ENCODE measurements at regions of chr1 and their contacts with region 1.

Region 1: DNA sequence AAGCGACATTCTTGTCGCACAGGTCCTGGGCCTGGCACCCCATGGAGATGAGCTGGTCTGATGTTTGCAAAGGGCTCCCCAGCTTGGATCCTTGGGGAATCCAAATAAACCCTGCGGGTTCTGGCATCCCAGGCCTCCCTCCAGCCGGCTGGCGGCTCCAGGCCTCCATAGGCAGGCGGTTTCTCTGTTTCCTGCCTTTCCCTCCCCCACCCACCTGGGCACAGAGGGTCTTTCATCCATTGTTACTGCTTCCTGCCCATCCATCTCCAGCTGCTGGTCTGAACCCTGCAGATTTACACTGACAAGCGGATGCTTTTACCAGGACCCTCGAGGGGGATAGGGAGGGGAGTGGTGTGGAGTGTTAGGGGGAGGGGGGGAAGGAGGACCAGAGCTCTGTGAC is 39.1 kb upstream of the ID3 start:
- DNase-seq: no peak
- ATAC-seq: no peak
- H3K4me3 ChIP-seq: no peak overlapping the region
- H3K4me3 Mint-ChIP-seq: peak overlapping the region in 5 of 10 donors; percentile 6 to 88 (median 69)
- H3K27ac ChIP-seq: peak overlapping the region; percentile 40
- H3K27ac Mint-ChIP-seq: peak overlapping the region in 6 of 9 donors; percentile 3 to 84 (median 72)
- H3K4me1 ChIP-seq: peaks cover 73 to 92% of the 10 kb centered on the region in 2 donors
- H3K4me1 Mint-ChIP-seq: peaks cover 50 to 97% (median 85%) of the 10 kb centered on the region in 7 donors
- H3K27me3 ChIP-seq: no peaks in the 10 kb centered on the region
- H3K27me3 Mint-ChIP-seq: no peaks in the 10 kb centered on the region

Region 2: DNA sequence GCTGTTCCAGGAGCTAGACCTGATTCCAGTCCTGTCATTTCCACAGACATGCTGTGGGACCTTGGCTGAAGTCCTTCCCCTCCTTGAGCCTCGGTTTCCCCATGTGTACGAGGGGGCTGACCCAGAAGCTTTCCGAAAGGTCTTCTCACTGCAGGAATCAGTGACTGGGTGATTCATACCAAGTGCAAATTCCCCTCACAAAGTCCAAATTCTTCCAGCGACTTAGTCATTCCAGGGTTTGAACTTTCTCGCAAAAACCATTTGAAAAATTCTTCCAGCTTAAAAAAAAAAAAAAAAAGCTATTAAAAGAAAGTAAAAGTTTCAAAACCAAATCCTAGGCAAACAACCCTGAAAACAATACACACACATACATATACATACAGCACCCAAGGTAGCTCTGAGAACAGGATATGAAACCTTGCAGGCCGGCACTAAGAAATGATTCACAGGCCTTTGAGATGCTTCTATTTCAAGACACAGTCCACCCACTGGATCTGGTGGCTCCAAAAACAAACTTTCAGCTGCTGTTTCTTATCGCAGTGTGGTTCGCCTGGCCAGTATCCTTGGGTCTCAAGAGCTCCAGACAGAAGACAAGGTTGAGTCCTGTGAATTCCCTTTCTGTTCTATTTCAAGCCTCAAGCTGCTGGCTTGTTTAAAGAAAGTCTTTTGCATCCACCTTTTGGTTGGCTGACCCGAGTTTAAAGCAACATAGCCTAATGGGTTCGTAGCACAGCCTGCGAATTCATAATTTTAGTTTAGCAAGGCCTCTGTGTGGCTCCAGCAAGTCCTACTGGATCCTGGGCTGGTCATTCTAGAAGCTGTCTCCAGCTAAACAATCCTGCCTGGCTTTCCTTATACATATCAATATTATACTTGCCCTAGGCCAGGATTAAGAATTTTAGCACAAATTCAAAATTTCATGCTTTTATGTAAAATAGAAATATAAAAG is 21.1 kb before region 1 on chr1:
- CTCF ChIA-PET with region 1: interaction called, 9 read pairs
- POLR2A ChIA-PET with region 1: interaction called, 1,267 read pairs
- intact Hi-C with region 1: loop called in 1 of 2 experiments (anchors 2 kb)
- DNase-seq: peak in 1 of 9 donors; percentile 50
- ATAC-seq: peak; percentile 79
- H3K4me3 ChIP-seq: peak overlapping the region; percentile 25
- H3K4me3 Mint-ChIP-seq: peak overlapping the region; percentile 41 to 72 (median 62)
- H3K27ac ChIP-seq: peak overlapping the region; percentile 59
- H3K27ac Mint-ChIP-seq: peak overlapping the region; percentile 22 to 97 (median 84)
- H3K4me1 ChIP-seq: peaks cover 6 to 29% of the 10 kb centered on the region in 2 donors
- H3K4me1 Mint-ChIP-seq: peaks cover 12 to 67% (median 53%) of the 10 kb centered on the region in 7 donors
- H3K27me3 ChIP-seq: no peaks in the 10 kb centered on the region
- H3K27me3 Mint-ChIP-seq: no peaks in the 10 kb centered on the region

Region 3: DNA sequence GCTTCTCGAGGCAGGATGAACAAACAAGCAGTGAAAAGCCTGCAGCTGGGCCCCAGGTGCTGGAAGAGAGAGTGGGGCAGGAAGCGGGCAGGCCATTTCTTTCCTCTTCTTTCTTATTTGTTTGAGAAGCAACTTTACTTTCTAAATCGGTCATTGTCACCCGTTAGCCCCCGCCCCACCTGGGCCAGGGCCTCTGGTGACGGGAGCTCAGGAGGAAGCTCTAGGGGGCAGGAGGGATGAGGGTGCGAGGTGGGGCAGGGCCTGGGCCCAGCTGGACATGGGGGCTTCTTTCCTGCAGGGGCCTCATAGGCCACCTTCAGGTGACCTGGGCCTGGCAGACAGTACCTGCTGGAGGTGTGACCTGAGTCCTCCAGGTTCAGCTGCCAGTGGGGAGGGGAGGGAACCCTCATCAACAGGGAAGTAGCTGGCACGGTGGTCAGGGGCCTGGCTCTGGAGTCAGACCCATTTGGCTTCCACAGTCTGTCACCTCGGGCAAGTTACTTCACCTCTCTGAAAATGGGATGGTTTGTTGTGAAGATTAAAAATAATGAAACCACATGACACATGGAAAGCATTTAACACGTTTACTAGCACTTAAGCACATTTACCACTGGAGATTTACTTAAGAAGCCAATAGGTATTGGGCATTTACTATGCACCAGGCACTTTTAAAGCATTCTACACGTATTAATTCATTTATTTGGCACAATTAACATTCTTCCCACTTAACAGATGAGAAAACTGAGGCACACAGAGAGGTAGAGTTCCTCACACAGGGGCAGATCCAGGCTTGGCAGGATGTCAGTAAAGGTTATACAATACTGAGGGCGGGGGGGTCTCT is 15.0 kb after region 1 on chr1:
- CTCF ChIA-PET with region 1: interaction called, 46 read pairs
- POLR2A ChIA-PET with region 1: interaction called, 1,267 read pairs
- intact Hi-C with region 1: loop called (anchors 1 to 2 kb)
- DNase-seq: peak in 8 of 9 donors; percentile 52 to 72 (median 64)
- ATAC-seq: peak; percentile 57
- H3K4me3 ChIP-seq: peak overlapping the region; percentile 14
- H3K4me3 Mint-ChIP-seq: peak overlapping the region; percentile 48 to 84 (median 71)
- H3K27ac ChIP-seq: peak overlapping the region; percentile 71
- H3K27ac Mint-ChIP-seq: peak overlapping the region; percentile 91 to 98 (median 96)
- H3K4me1 ChIP-seq: peaks cover 41 to 68% of the 10 kb centered on the region in 2 donors
- H3K4me1 Mint-ChIP-seq: peaks cover 45 to 88% (median 85%) of the 10 kb centered on the region in 7 donors
- H3K27me3 ChIP-seq: no peaks in the 10 kb centered on the region
- H3K27me3 Mint-ChIP-seq: peaks cover 0 to 2% (median 0%) of the 10 kb centered on the region in 5 donors

Region 4: DNA sequence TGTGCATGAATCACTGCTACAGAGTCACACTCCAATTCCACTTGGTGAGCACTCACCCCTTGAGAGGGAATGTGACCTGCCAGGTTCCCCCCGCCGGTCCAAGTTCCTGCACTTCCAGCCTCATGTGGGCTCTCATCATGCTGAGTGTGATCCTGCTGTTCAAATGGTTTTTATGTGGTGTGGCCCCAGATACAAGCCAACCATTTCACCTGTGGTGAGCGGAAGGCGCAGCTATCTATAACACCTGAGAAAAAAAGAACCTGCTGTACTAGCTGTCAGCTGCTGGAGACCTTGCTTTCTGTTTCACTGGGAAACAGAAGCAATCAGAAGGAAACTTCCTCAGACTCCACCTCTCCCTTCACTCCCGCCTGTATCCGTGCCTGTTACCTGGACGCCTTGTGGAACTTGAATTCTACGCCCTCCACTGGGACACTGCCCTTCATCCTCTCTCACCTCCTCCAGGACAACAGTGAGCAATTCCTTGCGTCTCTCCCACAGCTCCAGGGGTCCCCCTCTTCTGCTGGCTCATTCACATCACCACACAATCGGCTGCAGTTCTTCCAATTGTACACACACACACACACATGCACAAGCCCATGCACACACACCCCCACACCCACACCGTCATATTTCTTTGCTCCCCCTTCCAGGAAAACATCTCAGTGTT is 28.8 kb after region 1 on chr1:
- CTCF ChIA-PET with region 1: interaction called, 3 read pairs
- POLR2A ChIA-PET with region 1: interaction called, 195 read pairs
- intact Hi-C with region 1: no loop called
- DNase-seq: peak in 7 of 9 donors; percentile 55 to 72 (median 67)
- ATAC-seq: peak; percentile 90
- H3K4me3 ChIP-seq: peak overlapping the region; percentile 69
- H3K4me3 Mint-ChIP-seq: peak overlapping the region; percentile 81 to 99 (median 96)
- H3K27ac ChIP-seq: peak overlapping the region; percentile 78
- H3K27ac Mint-ChIP-seq: peak overlapping the region; percentile 77 to 98 (median 96)
- H3K4me1 ChIP-seq: peaks cover 0 to 37% of the 10 kb centered on the region in 2 donors
- H3K4me1 Mint-ChIP-seq: peaks cover 33 to 82% (median 73%) of the 10 kb centered on the region in 7 donors
- H3K27me3 ChIP-seq: no peaks in the 10 kb centered on the region
- H3K27me3 Mint-ChIP-seq: no peaks in the 10 kb centered on the region

Measured in naive thymus-derived CD4-positive, alpha-beta T cell (primary cell).